Endothelial cell of umbilical vein (primary cell): ENCODE measurements at regions of chr11 and their contacts with region 1.

Region 1: DNA sequence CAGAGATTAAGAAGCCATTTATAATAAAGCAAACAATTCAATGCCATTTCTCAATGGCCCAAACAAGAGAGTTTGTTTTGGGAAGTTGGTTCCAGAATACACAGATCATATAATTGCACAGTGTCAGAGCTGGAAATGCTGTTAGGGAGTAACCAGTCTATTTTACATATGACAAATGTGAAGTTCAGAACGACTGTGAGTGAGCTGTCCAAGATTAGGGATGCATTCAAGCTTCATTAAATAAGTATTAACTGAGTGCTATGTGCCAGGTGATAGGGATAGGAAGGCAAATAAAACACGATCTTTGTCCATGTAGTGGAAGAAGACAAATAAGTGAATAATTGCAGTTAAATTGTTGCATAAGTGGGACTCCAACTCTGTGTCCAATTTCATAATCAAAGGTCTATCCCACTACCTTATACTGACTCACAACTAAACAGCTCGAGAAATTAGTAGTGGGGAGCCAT is 33.1 kb upstream of the PICALM start:
- DNase-seq: no peak
- H3K4me3 ChIP-seq: no peak overlapping the region
- H3K27ac ChIP-seq: no peak overlapping the region
- H3K4me1 ChIP-seq: no peaks in the 10 kb centered on the region
- H3K27me3 ChIP-seq: no peaks in the 10 kb centered on the region
- CTCF ChIP-seq: no peak
- POLR2A ChIP-seq: no peak

Region 2: DNA sequence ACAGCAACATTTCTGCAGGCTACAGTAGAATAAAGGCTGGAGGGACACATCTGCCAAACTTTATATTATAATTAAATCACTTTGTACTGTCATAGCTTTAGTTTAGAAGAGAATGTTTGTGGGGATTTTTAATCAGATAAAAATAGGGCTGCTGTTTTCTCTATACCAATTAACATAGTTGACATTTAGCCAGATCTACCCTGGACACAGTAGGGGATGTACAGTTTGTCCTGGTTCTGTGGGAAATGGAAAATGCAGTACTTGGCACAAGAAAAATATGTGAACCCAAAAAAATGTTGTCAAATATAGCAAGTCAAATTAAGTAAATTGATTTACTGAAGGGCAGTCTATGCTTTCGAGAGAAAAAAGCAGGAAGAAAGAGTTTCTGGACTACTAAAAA is 12.3 kb before region 1 on chr11:
- CTCF ChIA-PET with region 1: interaction called, 3 read pairs
- POLR2A ChIA-PET with region 1: no interaction called
- dilution Hi-C with region 1: no loop called
- intact Hi-C with region 1: loop called (anchors 2 kb)
- DNase-seq: no peak
- H3K4me3 ChIP-seq: no peak overlapping the region
- H3K27ac ChIP-seq: no peak overlapping the region
- H3K4me1 ChIP-seq: no peaks in the 10 kb centered on the region
- H3K27me3 ChIP-seq: no peaks in the 10 kb centered on the region
- CTCF ChIP-seq: no peak
- POLR2A ChIP-seq: no peak